Mammary epithelial cell (primary cell): ENCODE measurements at regions of chr19 and their contacts with region 1.

Region 1: GRCh38 chr19:39341719-39342604 is at the start of gene SAMD4B:
- DNase-seq: peak; percentile 96
- H3K4me3 ChIP-seq: peak within 1 kb of the TSS; percentile 79 to 83 (median 80)
- H3K27ac ChIP-seq: peak within 1 kb of the TSS; percentile 81
- H3K4me1 ChIP-seq: peaks cover 6% of the 10 kb centered on the region
- H3K27me3 ChIP-seq: no peaks in the 10 kb centered on the region
- CTCF ChIP-seq: peak; percentile 32 to 71
- total RNA-seq, gene SAMD4B: 54.3 to 95.2 TPM

Region 2: GRCh38 chr19:38877781-38878574 is 464.0 kb before region 1 on chr19 and contains the start of gene RINL:
- CTCF ChIA-PET with region 1: no interaction called
- dilution Hi-C with region 1: no loop called
- in situ Hi-C with region 1: no loop called
- intact Hi-C with region 1: no loop called
- DNase-seq: no peak
- H3K4me3 ChIP-seq: no peak within 1 kb of the TSS
- H3K27ac ChIP-seq: no peak within 1 kb of the TSS
- H3K4me1 ChIP-seq: peaks cover 9% of the 10 kb centered on the region
- H3K27me3 ChIP-seq: no peaks in the 10 kb centered on the region
- CTCF ChIP-seq: no peak
- total RNA-seq, gene RINL: 5.7 to 9.2 TPM

Region 3: GRCh38 chr19:38949580-38950367 is 392.2 kb before region 1 on chr19:
- CTCF ChIA-PET with region 1: no interaction called
- dilution Hi-C with region 1: no loop called
- in situ Hi-C with region 1: loop called in 1 of 2 experiments (anchors 25 kb)
- intact Hi-C with region 1: no loop called
- DNase-seq: peak; percentile 54
- H3K4me3 ChIP-seq: peak overlapping the region in 1 of 3 experiments; percentile 12
- H3K27ac ChIP-seq: no peak overlapping the region
- H3K4me1 ChIP-seq: peaks cover 4% of the 10 kb centered on the region
- H3K27me3 ChIP-seq: no peaks in the 10 kb centered on the region
- CTCF ChIP-seq: no peak

Region 4: GRCh38 chr19:39223681-39224279 is 118.2 kb before region 1 on chr19:
- CTCF ChIA-PET with region 1: interaction called, 14 read pairs
- dilution Hi-C with region 1: loop called (anchors 5 kb)
- in situ Hi-C with region 1: no loop called
- intact Hi-C with region 1: no loop called
- DNase-seq: peak; percentile 17
- H3K4me3 ChIP-seq: no peak overlapping the region
- H3K27ac ChIP-seq: no peak overlapping the region
- H3K4me1 ChIP-seq: no peaks in the 10 kb centered on the region
- H3K27me3 ChIP-seq: peaks cover 3% of the 10 kb centered on the region
- CTCF ChIP-seq: no peak